A549 (cell line): ENCODE measurements at regions of chr19 and their contacts with region 1.

Region 1: GRCh38 chr19:15357906-15358305 is 21.7 kb downstream of the AKAP8 start:
- DNase-seq: no peak
- ATAC-seq: no peak
- H3K4me3 ChIP-seq: no peak overlapping the region
- H3K27ac ChIP-seq: peak overlapping the region; percentile 74 to 82; a peak in 2 of 6 replicates
- H3K4me1 ChIP-seq: peaks cover 17% of the 10 kb centered on the region
- CTCF ChIP-seq: no peak
- EP300 ChIP-seq: no peak
- POLR2A ChIP-seq: no peak
- RAD21 ChIP-seq: no peak

Region 2: GRCh38 chr19:15379083-15379995 is 21.4 kb after region 1 on chr19 and contains the start of gene AKAP8:
- CTCF ChIA-PET with region 1: interaction called, 3 read pairs
- POLR2A ChIA-PET with region 1: interaction called, 10 read pairs
- DNase-seq: peak; percentile 92 to 98
- ATAC-seq: peak; percentile 92 to 93
- H3K4me3 ChIP-seq: peak within 1 kb of the TSS; percentile 69
- H3K27ac ChIP-seq: peak within 1 kb of the TSS; percentile 99
- H3K4me1 ChIP-seq: peaks cover 22% of the 10 kb centered on the region
- CTCF ChIP-seq: no peak
- EP300 ChIP-seq: no peak
- POLR2A ChIP-seq: peak; percentile 53
- RAD21 ChIP-seq: no peak
- polyA plus RNA-seq, gene AKAP8: 13.5 and 16.2 TPM in 2 replicates